ENCODE measurements at regions of chr16 and their contacts with region 1.

Region 1: GRCh38 chr16:71808593-71809459 is at the start of gene AP1G1:
- DNase-seq: peak; percentile 96
- ATAC-seq: peak; percentile 98 to 99
- total RNA-seq, gene AP1G1: 40.1 to 49.3 TPM

Region 2: GRCh38 chr16:71845639-71846430 is 37.0 kb after region 1 on chr16 and contains the start of gene ATXN1L:
- intact Hi-C with region 1: loop called in 1 of 2 experiments (anchors 5 kb)
- DNase-seq: peak; percentile 93
- ATAC-seq: peak; percentile 98
- total RNA-seq, gene ATXN1L: 16.8 to 21.4 TPM

Region 3: GRCh38 chr16:71883849-71884638 is 75.2 kb after region 1 on chr16 and contains the start of gene ZNF821:
- intact Hi-C with region 1: loop called in 1 of 2 experiments (anchors 5 kb)
- DNase-seq: peak; percentile 84
- ATAC-seq: peak; percentile 93 to 95
- total RNA-seq, gene ZNF821: 3.6 to 5.7 TPM

Region 4: GRCh38 chr16:71894921-71895678 is 86.3 kb after region 1 on chr16 and contains the start of gene IST1:
- intact Hi-C with region 1: loop called in 1 of 2 experiments (anchors 2 kb)
- DNase-seq: peak; percentile 99
- ATAC-seq: peak; percentile 97 to 98
- total RNA-seq, gene IST1: 117 to 138 TPM

Region 5: GRCh38 chr16:72819345-72819744 is 1010.5 kb after region 1 on chr16:
- intact Hi-C with region 1: no loop called
- DNase-seq: no peak
- ATAC-seq: no peak